Heart right ventricle (tissue), 16 donors: ENCODE measurements at regions of chr16 and their contacts with region 1.

Region 1: DNA sequence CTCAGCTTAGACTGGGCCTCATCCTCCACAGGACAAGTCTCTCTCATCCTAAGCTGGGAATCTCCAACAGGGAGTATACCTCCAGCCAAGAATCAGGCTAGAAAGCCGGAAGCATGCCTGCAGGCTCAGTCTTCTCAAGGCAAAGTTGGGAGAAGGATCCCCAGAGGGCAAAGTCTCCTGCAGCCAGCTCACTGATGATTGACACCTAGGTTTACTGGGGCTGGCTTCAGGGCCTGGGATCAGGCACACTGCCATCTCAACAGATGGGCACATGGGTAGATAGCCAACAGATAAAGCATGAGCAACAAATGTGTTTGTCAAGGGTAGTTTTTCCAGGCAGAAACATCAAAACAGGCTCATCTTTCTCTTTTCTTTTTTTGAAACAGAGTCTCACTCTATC is 56.1 kb upstream of the TOX3 start:
- DNase-seq: no peak
- ATAC-seq: no peak
- H3K4me3 ChIP-seq: no peak overlapping the region
- H3K27ac ChIP-seq: no peak overlapping the region
- H3K4me1 ChIP-seq: no peaks in the 10 kb centered on the region
- H3K27me3 ChIP-seq: peaks cover 0 to 6% (median 0%) of the 10 kb centered on the region in 7 donors
- CTCF ChIP-seq: no peak

Region 2: DNA sequence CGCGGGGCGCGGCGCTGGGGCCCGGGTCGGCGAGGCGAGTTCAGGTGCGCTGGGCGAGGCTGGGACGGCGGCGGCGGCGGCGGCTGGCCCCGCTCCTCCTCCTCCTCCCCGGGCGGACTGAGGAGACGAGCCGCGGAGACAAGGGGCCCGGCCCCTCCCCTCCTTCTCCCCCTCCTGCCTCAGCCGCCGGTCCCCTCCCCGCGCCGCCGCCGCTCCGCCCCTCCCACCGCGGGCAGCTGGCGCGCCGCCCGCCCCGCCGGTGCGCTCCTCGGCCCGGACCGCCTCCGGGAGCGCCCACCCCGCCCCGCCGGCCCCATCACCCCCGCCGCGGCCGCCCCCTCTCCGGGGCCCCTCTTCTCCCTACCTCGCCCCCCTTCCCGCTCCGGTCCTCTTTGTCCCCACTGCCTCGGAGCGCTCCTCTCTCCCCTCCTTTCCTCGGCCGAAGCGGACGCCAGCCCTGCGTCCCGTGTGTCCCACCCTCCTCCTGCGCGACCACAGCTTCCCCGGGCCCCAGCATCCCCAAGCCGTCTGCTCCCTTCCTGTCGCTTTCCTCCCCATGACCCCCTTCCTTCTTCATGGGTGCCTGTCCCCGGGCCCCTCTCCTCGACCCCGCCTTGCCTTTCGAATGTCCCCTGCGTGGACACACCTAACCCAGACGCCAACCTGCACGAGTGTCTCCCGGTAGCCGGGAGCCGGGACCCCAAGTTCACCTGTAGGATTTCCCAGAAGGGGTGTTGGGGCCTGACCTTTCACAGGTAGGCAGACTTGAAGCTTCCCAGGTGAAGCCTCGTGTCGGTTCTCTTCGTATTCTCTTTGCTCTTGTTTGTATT is 55.8 kb before region 1 on chr16 and contains the start of gene TOX3:
- intact Hi-C with region 1: loop called in 1 of 10 experiments (anchors 10 kb)
- DNase-seq: peak in 1 of 2 donors; percentile 10
- ATAC-seq: no peak
- H3K4me3 ChIP-seq: peak within 1 kb of the TSS in 9 of 10 donors; percentile 7 to 43 (median 28)
- H3K27ac ChIP-seq: no peak within 1 kb of the TSS
- H3K4me1 ChIP-seq: peaks cover 0 to 18% (median 13%) of the 10 kb centered on the region in 9 donors
- H3K27me3 ChIP-seq: peaks cover 0 to 93% (median 81%) of the 10 kb centered on the region in 7 donors
- CTCF ChIP-seq: no peak
- total RNA-seq, gene TOX3: not detected

Region 3: DNA sequence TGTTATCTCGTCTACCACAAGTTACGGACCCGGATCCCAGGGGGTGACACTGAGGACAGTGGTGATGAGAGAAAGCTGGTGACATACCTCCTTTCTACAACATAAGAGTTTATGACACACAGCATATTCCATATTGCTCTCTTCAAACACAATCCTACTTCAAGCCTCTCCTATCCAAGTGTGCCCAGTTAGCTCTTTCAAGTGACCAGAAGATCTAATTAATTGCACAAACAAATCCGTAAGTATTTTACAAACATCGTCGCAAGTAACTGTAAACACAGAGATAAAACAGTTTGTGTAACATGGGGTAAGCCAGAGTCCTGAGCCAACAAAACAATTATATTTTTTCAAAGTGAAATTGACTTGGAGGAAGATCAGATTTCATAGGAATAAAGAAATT is 214.7 kb after region 1 on chr16:
- intact Hi-C with region 1: no loop called
- DNase-seq: no peak
- ATAC-seq: no peak
- H3K4me3 ChIP-seq: no peak overlapping the region
- H3K27ac ChIP-seq: no peak overlapping the region
- H3K4me1 ChIP-seq: peaks cover 0 to 4% (median 0%) of the 10 kb centered on the region in 9 donors
- H3K27me3 ChIP-seq: no peaks in the 10 kb centered on the region
- CTCF ChIP-seq: no peak